PC-3 (cell line): ENCODE measurements at regions of chr16 and their contacts with region 1.

Region 1: DNA sequence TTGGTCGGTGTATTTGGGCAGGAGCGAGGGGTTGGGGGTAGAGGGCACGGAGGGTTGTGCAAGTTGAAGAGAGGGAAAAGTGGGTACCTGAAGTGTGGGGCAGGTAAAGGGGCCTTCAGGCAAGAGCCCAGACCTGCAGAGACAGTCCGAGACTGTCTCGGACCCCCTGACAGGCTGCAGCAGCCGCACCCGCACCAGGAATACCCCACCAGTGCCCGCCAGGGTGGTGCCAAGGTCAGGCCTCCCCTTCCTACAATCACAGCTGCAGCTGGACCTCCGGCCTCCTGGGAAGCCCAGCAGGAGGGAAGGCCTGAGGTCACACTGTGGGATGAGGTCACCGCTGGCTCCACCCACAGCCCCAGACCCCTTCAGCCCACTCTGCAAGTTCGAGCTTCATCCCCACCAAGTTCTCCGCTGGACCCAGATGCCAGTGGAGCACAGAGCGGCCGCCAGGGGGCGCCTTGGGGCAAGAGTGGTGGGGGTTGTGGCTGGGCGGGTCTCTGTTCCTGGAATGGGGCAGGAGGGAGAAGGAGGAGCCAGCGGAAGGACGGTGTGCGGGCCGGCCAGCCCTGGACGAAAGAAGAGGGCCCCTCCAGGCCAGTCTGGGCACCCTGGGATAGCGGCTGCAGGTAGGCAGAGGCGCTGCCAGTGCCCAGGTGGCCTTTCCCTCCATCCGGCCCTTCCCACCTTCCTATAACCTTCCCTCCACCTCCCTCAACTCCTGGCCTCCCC is at the start of gene HSD3B7:
- DNase-seq: peak; percentile 78
- ATAC-seq: peak; percentile 90
- H3K4me3 ChIP-seq: peak within 1 kb of the TSS; percentile 52; the same call in 1 of the 2 replicates
- H3K27ac ChIP-seq: no peak within 1 kb of the TSS
- H3K4me1 ChIP-seq: peaks cover 7% of the 10 kb centered on the region; the same call in 1 of the 2 replicates
- H3K27me3 ChIP-seq: no peaks in the 10 kb centered on the region
- CTCF ChIP-seq: peak; percentile 74
- total RNA-seq, gene HSD3B7: 12.0 and 16.3 TPM in 2 replicates

Region 2: GRCh38 chr16:31094424-31095120 is 109.7 kb after region 1 on chr16 and contains the start of gene VKORC1:
- CTCF ChIA-PET with region 1: interaction called, 4 read pairs
- POLR2A ChIA-PET with region 1: no interaction called
- intact Hi-C with region 1: loop called (anchors 2 kb)
- DNase-seq: peak; percentile 96
- ATAC-seq: peak; percentile 94
- H3K4me3 ChIP-seq: peak within 1 kb of the TSS; percentile 98
- H3K27ac ChIP-seq: peak within 1 kb of the TSS; percentile 68
- H3K4me1 ChIP-seq: peaks cover 7% of the 10 kb centered on the region; the same call in 1 of the 2 replicates
- H3K27me3 ChIP-seq: no peaks in the 10 kb centered on the region
- CTCF ChIP-seq: no peak
- total RNA-seq, gene VKORC1: 105 and 127 TPM in 2 replicates

Region 3: DNA sequence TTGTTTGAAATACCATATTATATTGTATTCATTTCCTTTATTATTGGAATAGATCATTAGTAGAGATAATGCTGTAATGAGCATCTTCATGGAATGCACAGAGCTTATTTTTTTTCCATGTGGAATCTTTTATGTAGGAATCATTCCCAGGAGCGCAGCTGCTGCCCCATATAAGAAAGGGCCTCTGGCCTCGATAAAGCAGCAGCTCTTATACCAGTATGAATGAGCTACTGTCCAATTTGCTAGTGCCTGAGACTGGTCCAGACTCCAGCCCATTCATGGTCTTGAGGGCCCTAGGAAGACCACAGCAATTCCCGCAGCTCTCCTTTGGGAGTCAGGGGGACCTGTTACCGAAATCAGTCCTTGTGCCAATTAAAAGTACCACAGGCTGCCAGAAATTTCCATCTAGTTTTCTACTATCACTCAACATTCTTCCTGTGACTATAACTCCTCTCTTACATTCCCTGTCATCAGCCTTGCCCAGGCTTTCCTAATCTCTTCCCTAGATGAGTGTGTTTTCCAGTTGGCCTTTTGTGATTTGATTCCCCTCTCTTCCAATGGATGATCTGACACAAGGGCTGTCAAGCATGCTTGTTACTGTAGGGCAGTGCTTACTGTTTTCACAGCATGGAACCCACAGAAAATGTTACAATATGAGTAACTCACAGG is 455.8 kb after region 1 on chr16:
- CTCF ChIA-PET with region 1: no interaction called
- POLR2A ChIA-PET with region 1: no interaction called
- intact Hi-C with region 1: loop called (anchors 5 kb)
- DNase-seq: no peak
- ATAC-seq: no peak
- H3K4me3 ChIP-seq: no peak overlapping the region
- H3K27ac ChIP-seq: no peak overlapping the region
- H3K4me1 ChIP-seq: no peaks in the 10 kb centered on the region
- H3K27me3 ChIP-seq: no peaks in the 10 kb centered on the region
- CTCF ChIP-seq: no peak